ENCODE measurements at regions of chr1 and their contacts with region 1.

Region 1: GRCh38 chr1:39158327-39159086 is 46.0 kb upstream of the MACF1 start:
- DNase-seq: peak; percentile 99
- ATAC-seq: peak; percentile 95
- H3K4me3 ChIP-seq: peak overlapping the region; percentile 64 to 71 (median 69)
- H3K27ac ChIP-seq: peak overlapping the region; percentile 87
- H3K4me1 ChIP-seq: peaks cover 69% of the 10 kb centered on the region
- H3K27me3 ChIP-seq: no peaks in the 10 kb centered on the region; a peak in 1 of 5 replicates
- CTCF ChIP-seq: no peak; the same call in 1 of the 2 replicates
- EP300 ChIP-seq: 0 out of 4 replicates have a peak, but pooled peaks have one; percentile 8 to 25
- POLR2A ChIP-seq: peak; percentile 59 to 75; a peak in 3 of 4 replicates
- RAD21 ChIP-seq: no peak

Region 2: GRCh38 chr1:39116868-39117728 is 41.4 kb before region 1 on chr1:
- CTCF ChIA-PET with region 1: no interaction called
- POLR2A ChIA-PET with region 1: interaction called, 15 read pairs
- in situ Hi-C with region 1: no loop called
- intact Hi-C with region 1: no loop called
- DNase-seq: peak; percentile 84
- ATAC-seq: peak; percentile 75
- H3K4me3 ChIP-seq: no peak overlapping the region
- H3K27ac ChIP-seq: peak overlapping the region; percentile 33
- H3K4me1 ChIP-seq: peaks cover 46% of the 10 kb centered on the region
- H3K27me3 ChIP-seq: no peaks in the 10 kb centered on the region
- CTCF ChIP-seq: no peak
- EP300 ChIP-seq: peak in 1 of 2 experiments; percentile 45; a peak in 1 of 4 replicates
- POLR2A ChIP-seq: no peak
- RAD21 ChIP-seq: no peak

Region 3: GRCh38 chr1:39170731-39171667 is 12.5 kb after region 1 on chr1:
- CTCF ChIA-PET with region 1: no interaction called
- POLR2A ChIA-PET with region 1: interaction called, 20 read pairs
- in situ Hi-C with region 1: no loop called
- intact Hi-C with region 1: no loop called
- DNase-seq: no peak
- ATAC-seq: peak; percentile 34; the same call in 1 of the 3 replicates
- H3K4me3 ChIP-seq: no peak overlapping the region
- H3K27ac ChIP-seq: no peak overlapping the region
- H3K4me1 ChIP-seq: peaks cover 79% of the 10 kb centered on the region
- H3K27me3 ChIP-seq: no peaks in the 10 kb centered on the region
- CTCF ChIP-seq: no peak
- EP300 ChIP-seq: no peak
- POLR2A ChIP-seq: no peak
- RAD21 ChIP-seq: no peak

Region 4: GRCh38 chr1:39196244-39197215 is 38.0 kb after region 1 on chr1:
- CTCF ChIA-PET with region 1: no interaction called
- POLR2A ChIA-PET with region 1: interaction called, 7 read pairs
- in situ Hi-C with region 1: no loop called
- intact Hi-C with region 1: loop called (anchors 2 kb)
- DNase-seq: no peak
- ATAC-seq: no peak
- H3K4me3 ChIP-seq: no peak overlapping the region
- H3K27ac ChIP-seq: no peak overlapping the region
- H3K4me1 ChIP-seq: peaks cover 35% of the 10 kb centered on the region
- H3K27me3 ChIP-seq: no peaks in the 10 kb centered on the region
- CTCF ChIP-seq: no peak
- EP300 ChIP-seq: no peak
- POLR2A ChIP-seq: no peak
- RAD21 ChIP-seq: no peak

Region 5: GRCh38 chr1:40040511-40041465 is 882.3 kb after region 1 on chr1 and contains the start of gene CAP1:
- CTCF ChIA-PET with region 1: no interaction called
- POLR2A ChIA-PET with region 1: no interaction called
- in situ Hi-C with region 1: no loop called
- intact Hi-C with region 1: loop called (anchors 5 kb)
- DNase-seq: peak; percentile 94
- ATAC-seq: peak; percentile 92
- H3K4me3 ChIP-seq: peak within 1 kb of the TSS; percentile 88 to 95 (median 92)
- H3K27ac ChIP-seq: peak within 1 kb of the TSS; percentile 94
- H3K4me1 ChIP-seq: peaks cover 42% of the 10 kb centered on the region
- H3K27me3 ChIP-seq: no peaks in the 10 kb centered on the region; a peak in 1 of 5 replicates
- CTCF ChIP-seq: no peak
- EP300 ChIP-seq: 0 out of 4 replicates have a peak, but pooled peaks of 1 of the 2 experiments have one; percentile 3
- POLR2A ChIP-seq: peak; percentile 57 to 87
- RAD21 ChIP-seq: 0 out of 2 replicates have a peak, but pooled peaks have one; percentile 9
- total RNA-seq, gene CAP1: 174 and 228 TPM in 2 replicates